OCI-LY7 (cell line): ENCODE measurements at regions of chr6 and their contacts with region 1.

Region 1: GRCh38 chr6:146700078-146700686 is 101.4 kb downstream of the ADGB start:
- DNase-seq: peak; percentile 62
- H3K4me3 ChIP-seq: no peak overlapping the region
- H3K27ac ChIP-seq: no peak overlapping the region
- H3K4me1 ChIP-seq: no peaks in the 10 kb centered on the region
- CTCF ChIP-seq: peak; percentile 90

Region 2: DNA sequence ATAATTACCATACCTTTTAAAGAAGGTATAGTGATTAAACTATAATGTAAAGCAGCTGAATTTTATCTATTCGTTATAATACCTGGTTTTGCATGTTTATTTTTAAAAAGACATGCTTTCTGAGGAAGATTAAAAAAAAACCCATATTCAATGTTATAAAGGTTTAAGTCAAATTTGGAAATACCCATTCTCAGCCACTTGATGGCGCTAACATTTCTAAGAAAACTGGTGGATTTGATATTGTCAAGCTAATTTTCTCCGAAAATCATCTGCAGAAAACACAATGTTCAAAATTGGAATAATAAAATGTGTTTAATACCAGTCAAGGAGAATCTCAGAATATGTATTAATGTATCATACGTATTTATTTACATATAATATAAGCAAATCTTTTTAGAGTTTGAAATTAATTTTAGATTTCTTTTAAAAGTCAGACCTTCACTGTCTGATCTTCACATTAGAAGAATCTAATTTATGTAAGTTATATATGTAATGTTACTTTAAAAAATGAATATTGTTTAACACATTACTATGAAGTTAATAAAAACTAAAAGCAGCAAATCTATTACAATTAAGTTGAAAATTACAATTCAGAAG is 771.0 kb before region 1 on chr6:
- CTCF ChIA-PET with region 1: no interaction called
- POLR2A ChIA-PET with region 1: no interaction called
- intact Hi-C with region 1: loop called (anchors 5 kb)
- DNase-seq: peak; percentile 63
- H3K4me3 ChIP-seq: no peak overlapping the region
- H3K27ac ChIP-seq: no peak overlapping the region
- H3K4me1 ChIP-seq: no peaks in the 10 kb centered on the region
- CTCF ChIP-seq: peak; percentile 98

Region 3: DNA sequence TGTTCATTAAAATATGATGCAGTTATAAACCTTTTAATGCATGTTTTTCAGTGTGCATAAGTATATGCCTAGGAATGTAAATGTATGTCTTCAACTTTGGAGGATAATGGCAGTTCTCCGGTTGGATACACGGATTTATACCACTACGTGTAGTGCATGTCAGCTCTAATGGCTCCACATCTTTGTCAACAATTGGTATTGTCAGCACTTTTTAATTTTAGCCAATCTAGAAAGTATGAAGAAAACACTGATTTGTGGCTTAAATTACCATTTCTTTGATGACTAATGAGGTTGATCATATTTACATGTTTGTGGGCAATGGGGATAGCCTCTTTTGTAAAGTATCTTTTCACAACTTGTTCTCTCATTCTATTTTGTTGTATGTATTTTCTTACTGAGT is 167.5 kb before region 1 on chr6:
- CTCF ChIA-PET with region 1: no interaction called
- POLR2A ChIA-PET with region 1: no interaction called
- intact Hi-C with region 1: no loop called
- DNase-seq: no peak
- H3K4me3 ChIP-seq: no peak overlapping the region
- H3K27ac ChIP-seq: no peak overlapping the region
- H3K4me1 ChIP-seq: no peaks in the 10 kb centered on the region
- CTCF ChIP-seq: no peak

Region 4: DNA sequence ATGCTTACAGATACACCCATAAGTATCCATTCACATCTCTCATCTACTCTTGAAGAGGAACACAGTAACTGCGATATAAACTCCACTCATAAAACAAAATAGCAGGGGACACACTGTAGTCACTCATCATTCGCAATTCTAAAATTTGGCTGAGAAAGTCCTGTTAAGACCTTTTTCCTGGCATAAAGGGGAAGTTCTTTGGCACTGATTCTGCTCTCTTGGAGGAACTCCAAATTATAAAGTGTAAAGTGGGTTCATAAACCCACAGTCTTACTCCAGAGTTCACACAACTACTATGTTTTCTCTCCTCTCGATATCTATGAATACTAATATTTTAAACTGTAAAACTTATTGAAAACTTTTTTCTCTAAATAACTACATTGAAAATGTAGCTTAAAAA is 20.8 kb before region 1 on chr6:
- CTCF ChIA-PET with region 1: no interaction called
- POLR2A ChIA-PET with region 1: no interaction called
- intact Hi-C with region 1: no loop called
- DNase-seq: no peak
- H3K4me3 ChIP-seq: no peak overlapping the region
- H3K27ac ChIP-seq: no peak overlapping the region
- H3K4me1 ChIP-seq: no peaks in the 10 kb centered on the region
- CTCF ChIP-seq: no peak